PC-9 (cell line): ENCODE measurements at regions of chr7 and their contacts with region 1.

Region 1: GRCh38 chr7:128010394-128011127 is 20.7 kb downstream of the LRRC4 start:
- DNase-seq: no peak
- H3K4me3 ChIP-seq: no peak overlapping the region
- H3K27ac ChIP-seq: no peak overlapping the region
- H3K4me1 ChIP-seq: no peaks in the 10 kb centered on the region
- H3K27me3 ChIP-seq: no peaks in the 10 kb centered on the region
- CTCF ChIP-seq: no peak

Region 2: DNA sequence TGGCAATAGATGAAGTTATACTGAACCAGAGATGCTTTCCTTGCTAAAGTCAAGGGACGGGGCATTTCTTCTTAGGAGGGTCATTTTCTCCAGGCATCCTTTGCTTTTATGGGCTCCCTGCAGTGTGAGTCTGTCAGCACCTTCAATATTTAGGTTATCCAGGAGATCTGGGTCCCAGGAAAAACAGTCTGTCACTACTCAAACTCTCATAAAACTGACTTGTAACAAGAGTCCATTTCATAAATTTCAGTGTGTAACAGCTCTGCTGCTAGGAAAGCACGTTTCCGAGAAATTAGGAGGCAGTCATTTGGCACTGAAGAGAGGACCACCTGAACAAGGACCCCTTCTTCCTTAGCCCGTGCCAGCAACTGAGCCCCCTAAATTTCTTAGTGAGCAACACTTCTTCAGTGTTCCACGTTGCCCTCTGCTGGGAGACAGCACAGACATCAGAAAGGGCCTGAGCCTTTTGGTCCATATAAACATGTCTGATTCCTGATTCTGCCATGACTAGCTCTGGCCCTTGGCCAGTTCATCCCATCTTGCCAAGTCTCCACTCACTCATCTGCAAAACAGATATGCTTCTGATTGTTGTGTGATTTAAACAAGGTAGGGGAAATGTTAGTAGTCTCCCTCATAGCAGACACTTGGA is 432.4 kb before region 1 on chr7:
- CTCF ChIA-PET with region 1: no interaction called
- POLR2A ChIA-PET with region 1: no interaction called
- intact Hi-C with region 1: no loop called
- DNase-seq: no peak
- H3K4me3 ChIP-seq: no peak overlapping the region
- H3K27ac ChIP-seq: no peak overlapping the region
- H3K4me1 ChIP-seq: no peaks in the 10 kb centered on the region
- H3K27me3 ChIP-seq: no peaks in the 10 kb centered on the region
- CTCF ChIP-seq: no peak; the same call in 1 of the 2 replicates

Region 3: GRCh38 chr7:127848241-127848640 is 162.3 kb before region 1 on chr7:
- CTCF ChIA-PET with region 1: interaction called, 10 read pairs
- POLR2A ChIA-PET with region 1: no interaction called
- intact Hi-C with region 1: no loop called
- DNase-seq: no peak
- H3K4me3 ChIP-seq: no peak overlapping the region
- H3K27ac ChIP-seq: no peak overlapping the region
- H3K4me1 ChIP-seq: no peaks in the 10 kb centered on the region
- H3K27me3 ChIP-seq: no peaks in the 10 kb centered on the region
- CTCF ChIP-seq: no peak